GM13976 (cell line): ENCODE measurements at regions of chr12 and their contacts with region 1.

Region 1: GRCh38 chr12:107607464-107608392 is 77.9 kb upstream of the PWP1 start:
- DNase-seq: peak; percentile 80
- CTCF ChIP-seq: peak; percentile 76

Region 2: DNA sequence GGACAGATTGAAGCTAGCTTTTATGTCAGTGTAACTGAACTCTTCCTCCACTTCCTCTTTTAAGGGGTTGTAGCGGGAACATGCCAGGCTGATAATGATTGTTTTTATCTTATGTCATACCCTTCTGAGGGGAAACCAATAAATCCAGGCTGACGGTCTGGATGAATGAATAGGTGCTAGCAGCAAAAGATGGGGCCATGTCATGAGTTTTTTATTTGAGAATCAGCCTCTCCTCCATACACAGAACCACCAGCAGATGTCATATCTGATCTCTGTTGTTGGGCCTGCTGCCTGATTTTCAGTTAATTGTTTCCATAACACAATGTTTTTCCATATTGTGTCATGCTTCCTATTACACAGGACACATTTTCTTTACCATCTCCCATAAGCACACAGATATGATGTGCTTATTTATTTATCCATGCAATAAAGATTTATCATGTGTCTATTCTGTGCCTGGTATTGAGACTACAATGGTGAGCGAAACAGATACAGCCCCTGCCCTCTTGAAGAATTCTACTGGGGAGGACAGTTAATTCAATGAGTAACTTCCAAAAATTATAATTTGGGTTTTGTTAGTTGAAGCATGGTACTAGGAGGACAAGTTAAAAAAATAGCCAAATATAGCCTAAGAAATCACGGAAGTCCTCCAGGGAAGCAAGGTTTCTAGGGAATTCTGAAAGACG is 480.8 kb before region 1 on chr12:
- in situ Hi-C with region 1: loop called (anchors 10 kb)
- DNase-seq: no peak
- CTCF ChIP-seq: no peak

Region 3: GRCh38 chr12:107533218-107533617 is 74.5 kb before region 1 on chr12:
- in situ Hi-C with region 1: no loop called
- DNase-seq: peak; percentile 41
- CTCF ChIP-seq: no peak